Caco-2 (cell line): ENCODE measurements at regions of chr18 and their contacts with region 1.

Region 1: DNA sequence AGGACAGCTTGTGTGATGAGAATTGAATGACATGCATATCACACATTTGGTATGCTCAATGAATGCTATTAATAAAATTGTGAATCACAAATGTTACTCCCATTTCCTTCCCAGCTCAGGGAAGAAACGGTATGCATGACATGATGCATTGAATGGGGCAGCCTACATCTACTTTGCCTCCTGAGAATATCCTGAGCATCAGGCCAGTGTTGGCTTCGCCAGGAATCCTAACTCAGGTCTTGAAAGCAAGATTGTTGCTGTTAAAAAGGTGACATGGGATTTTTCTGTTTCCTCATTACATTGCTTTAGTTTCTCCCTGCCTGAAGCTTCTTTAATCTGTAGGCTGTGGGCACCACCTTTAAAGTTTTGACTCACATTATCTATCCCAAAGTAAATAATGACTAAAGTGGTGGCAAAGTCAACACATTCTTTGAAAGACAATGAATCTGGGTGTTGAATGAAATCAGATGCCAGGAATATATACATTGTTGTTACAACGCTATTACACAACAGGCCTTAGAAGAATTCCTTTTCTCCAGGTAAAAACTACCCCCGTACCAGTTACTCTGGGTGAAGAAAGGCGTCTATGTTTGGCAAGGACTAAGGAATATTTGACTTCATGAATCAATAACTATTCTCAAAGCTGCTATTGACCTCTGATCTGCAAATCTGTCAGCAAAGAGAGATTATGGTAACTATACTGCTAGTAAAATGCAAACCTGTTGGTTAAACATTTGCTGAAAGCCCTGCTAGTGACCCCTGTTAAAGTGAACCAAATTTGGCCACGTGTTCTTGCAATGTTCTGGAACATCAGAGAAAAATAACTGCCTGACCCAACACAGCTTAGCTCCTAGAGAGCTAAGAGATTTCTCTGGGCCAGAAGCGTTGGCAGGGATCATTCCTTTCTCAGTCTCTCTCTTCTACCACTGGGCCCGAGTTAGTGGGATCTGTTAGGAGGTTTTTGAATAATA is 30.5 kb upstream of the NEDD4L start:
- DNase-seq: peak; percentile 67 to 68
- H3K4me3 ChIP-seq: no peak overlapping the region
- H3K4me3 Mint-ChIP-seq: no peak overlapping the region
- H3K27ac Mint-ChIP-seq: peak overlapping the region; percentile 35
- H3K4me1 ChIP-seq: peaks cover 47% of the 10 kb centered on the region
- H3K4me1 Mint-ChIP-seq: peaks cover 6% of the 10 kb centered on the region
- H3K27me3 ChIP-seq: no peaks in the 10 kb centered on the region
- H3K27me3 Mint-ChIP-seq: no peaks in the 10 kb centered on the region
- CTCF ChIP-seq: no peak

Region 2: GRCh38 chr18:57906852-57907251 is 106.7 kb before region 1 on chr18:
- CTCF ChIA-PET with region 1: no interaction called
- POLR2A ChIA-PET with region 1: no interaction called
- intact Hi-C with region 1: no loop called
- DNase-seq: no peak
- H3K4me3 ChIP-seq: no peak overlapping the region
- H3K4me3 Mint-ChIP-seq: no peak overlapping the region
- H3K27ac Mint-ChIP-seq: no peak overlapping the region
- H3K4me1 ChIP-seq: no peaks in the 10 kb centered on the region
- H3K4me1 Mint-ChIP-seq: no peaks in the 10 kb centered on the region
- H3K27me3 ChIP-seq: no peaks in the 10 kb centered on the region
- H3K27me3 Mint-ChIP-seq: no peaks in the 10 kb centered on the region
- CTCF ChIP-seq: no peak

Region 3: DNA sequence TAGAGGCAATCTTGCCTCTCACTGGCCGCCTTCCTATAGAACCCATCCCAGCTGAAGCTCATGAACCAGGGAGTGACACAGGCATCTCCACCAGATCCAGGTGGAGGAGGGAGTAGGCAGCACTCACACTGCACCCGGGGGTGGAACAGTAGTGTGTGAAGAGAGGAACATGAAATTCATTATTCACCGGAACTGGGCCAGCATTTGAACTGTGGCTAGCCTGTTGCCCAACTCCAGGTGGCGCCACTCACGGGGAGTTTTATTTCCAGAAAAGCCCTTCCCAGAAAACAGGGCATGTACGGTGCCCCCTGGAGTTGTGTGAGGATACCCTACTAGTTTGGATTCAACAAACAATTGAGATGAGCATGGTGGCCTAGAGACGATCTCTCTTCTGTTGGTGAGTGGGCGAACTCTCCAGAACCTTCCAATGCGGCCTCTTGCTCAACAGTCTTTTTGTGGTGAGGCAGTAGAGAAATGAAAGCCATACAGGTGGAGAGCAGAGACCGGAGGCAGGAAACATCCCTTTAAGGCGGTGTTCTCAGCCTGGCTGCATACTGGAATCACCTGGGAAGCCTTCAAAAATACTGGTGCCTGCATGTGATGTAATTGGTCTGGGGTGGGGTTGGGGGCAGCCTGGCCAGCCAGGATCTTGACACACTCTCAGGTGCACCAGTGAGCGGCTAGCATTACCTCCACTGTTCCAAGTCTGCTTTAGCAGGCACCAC is 43.0 kb before region 1 on chr18:
- CTCF ChIA-PET with region 1: no interaction called
- POLR2A ChIA-PET with region 1: no interaction called
- intact Hi-C with region 1: loop called (anchors 5 kb)
- DNase-seq: no peak
- H3K4me3 ChIP-seq: no peak overlapping the region
- H3K4me3 Mint-ChIP-seq: no peak overlapping the region
- H3K27ac Mint-ChIP-seq: no peak overlapping the region
- H3K4me1 ChIP-seq: peaks cover 7% of the 10 kb centered on the region; the same call in 1 of the 2 replicates
- H3K4me1 Mint-ChIP-seq: peaks cover 24% of the 10 kb centered on the region
- H3K27me3 ChIP-seq: no peaks in the 10 kb centered on the region
- H3K27me3 Mint-ChIP-seq: no peaks in the 10 kb centered on the region
- CTCF ChIP-seq: no peak

Region 4: DNA sequence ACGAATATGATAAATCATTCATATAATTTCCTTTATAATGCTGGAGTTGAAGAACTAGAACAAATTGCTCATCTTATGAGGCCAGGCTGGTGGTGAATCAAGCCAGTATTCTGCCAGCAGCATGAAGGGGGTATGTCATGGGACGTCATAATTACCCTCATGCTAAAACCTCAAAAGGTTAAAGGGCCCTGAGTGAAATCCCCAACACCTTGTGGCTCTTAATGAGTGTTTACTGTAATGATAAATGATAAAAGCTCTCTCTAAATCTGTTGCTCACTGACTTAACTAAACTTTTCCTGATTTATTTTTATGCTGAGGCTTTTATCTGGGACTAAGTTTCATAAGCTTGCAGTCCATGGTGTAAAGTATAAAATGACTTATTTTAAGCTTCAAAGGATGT is 12.2 kb after region 1 on chr18:
- CTCF ChIA-PET with region 1: interaction called, 4 read pairs
- POLR2A ChIA-PET with region 1: no interaction called
- intact Hi-C with region 1: loop called (anchors 1 kb)
- DNase-seq: no peak
- H3K4me3 ChIP-seq: no peak overlapping the region
- H3K4me3 Mint-ChIP-seq: no peak overlapping the region
- H3K27ac Mint-ChIP-seq: no peak overlapping the region
- H3K4me1 ChIP-seq: peaks cover 45% of the 10 kb centered on the region
- H3K4me1 Mint-ChIP-seq: no peaks in the 10 kb centered on the region
- H3K27me3 ChIP-seq: no peaks in the 10 kb centered on the region
- H3K27me3 Mint-ChIP-seq: no peaks in the 10 kb centered on the region
- CTCF ChIP-seq: no peak

Region 5: GRCh38 chr18:58087917-58088692 is 74.6 kb after region 1 on chr18:
- CTCF ChIA-PET with region 1: no interaction called
- POLR2A ChIA-PET with region 1: no interaction called
- intact Hi-C with region 1: no loop called
- DNase-seq: no peak
- H3K4me3 ChIP-seq: no peak overlapping the region
- H3K4me3 Mint-ChIP-seq: no peak overlapping the region
- H3K27ac Mint-ChIP-seq: peak overlapping the region; percentile 70
- H3K4me1 ChIP-seq: peaks cover 22% of the 10 kb centered on the region
- H3K4me1 Mint-ChIP-seq: peaks cover 7% of the 10 kb centered on the region
- H3K27me3 ChIP-seq: no peaks in the 10 kb centered on the region
- H3K27me3 Mint-ChIP-seq: no peaks in the 10 kb centered on the region
- CTCF ChIP-seq: no peak